CD4-positive, alpha-beta memory T cell (primary cell): ENCODE measurements at regions of chr10 and their contacts with region 1.

Region 1: GRCh38 chr10:51422311-51423120 is 276.9 kb downstream of the CSTF2T start:
- DNase-seq: peak in 4 of 5 donors; percentile 6 to 28 (median 14)
- H3K4me3 ChIP-seq: no peak overlapping the region
- H3K4me3 Mint-ChIP-seq: peak overlapping the region in 1 of 8 donors; percentile 49
- H3K27ac ChIP-seq: no peak overlapping the region
- H3K27ac Mint-ChIP-seq: peak overlapping the region in 1 of 7 donors; percentile 18
- H3K4me1 ChIP-seq: no peaks in the 10 kb centered on the region
- H3K4me1 Mint-ChIP-seq: peaks cover 2 to 7% (median 3%) of the 10 kb centered on the region in 4 donors
- H3K27me3 ChIP-seq: no peaks in the 10 kb centered on the region
- H3K27me3 Mint-ChIP-seq: peaks cover 3 to 4% of the 10 kb centered on the region in 2 donors

Region 2: GRCh38 chr10:51063659-51064535 is 358.6 kb before region 1 on chr10:
- CTCF ChIA-PET with region 1: interaction called, 8 read pairs
- POLR2A ChIA-PET with region 1: no interaction called
- intact Hi-C with region 1: loop called (anchors 1 kb)
- DNase-seq: no peak
- H3K4me3 ChIP-seq: no peak overlapping the region
- H3K4me3 Mint-ChIP-seq: no peak overlapping the region
- H3K27ac ChIP-seq: no peak overlapping the region
- H3K27ac Mint-ChIP-seq: no peak overlapping the region
- H3K4me1 ChIP-seq: no peaks in the 10 kb centered on the region
- H3K4me1 Mint-ChIP-seq: no peaks in the 10 kb centered on the region
- H3K27me3 ChIP-seq: no peaks in the 10 kb centered on the region
- H3K27me3 Mint-ChIP-seq: peaks cover 0 to 3% of the 10 kb centered on the region in 2 donors

Region 3: DNA sequence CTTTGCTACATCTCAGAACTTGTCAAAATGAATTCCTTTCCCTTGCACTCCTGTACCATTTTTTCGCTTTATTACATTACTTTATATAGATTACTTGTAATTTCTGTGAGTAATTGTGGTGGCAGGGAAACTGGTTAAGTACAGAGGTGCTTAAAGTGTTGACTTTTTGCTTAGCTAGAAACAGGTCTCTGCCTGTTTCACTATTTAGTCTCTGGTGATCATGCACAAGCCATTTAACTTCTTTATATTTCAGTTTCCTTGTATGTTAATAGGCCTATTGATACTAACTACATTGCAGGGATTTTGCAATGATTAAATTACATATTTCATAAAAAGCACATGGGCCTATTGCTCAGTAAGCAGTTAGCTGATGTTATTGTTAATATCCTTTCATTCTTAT is 114.4 kb before region 1 on chr10:
- CTCF ChIA-PET with region 1: no interaction called
- POLR2A ChIA-PET with region 1: no interaction called
- intact Hi-C with region 1: no loop called
- DNase-seq: no peak
- H3K4me3 ChIP-seq: no peak overlapping the region
- H3K4me3 Mint-ChIP-seq: no peak overlapping the region
- H3K27ac ChIP-seq: no peak overlapping the region
- H3K27ac Mint-ChIP-seq: no peak overlapping the region
- H3K4me1 ChIP-seq: no peaks in the 10 kb centered on the region
- H3K4me1 Mint-ChIP-seq: no peaks in the 10 kb centered on the region
- H3K27me3 ChIP-seq: no peaks in the 10 kb centered on the region
- H3K27me3 Mint-ChIP-seq: no peaks in the 10 kb centered on the region

Region 4: GRCh38 chr10:51564896-51565510 is 142.5 kb after region 1 on chr10:
- CTCF ChIA-PET with region 1: no interaction called
- POLR2A ChIA-PET with region 1: no interaction called
- intact Hi-C with region 1: no loop called
- DNase-seq: no peak
- H3K4me3 ChIP-seq: no peak overlapping the region
- H3K4me3 Mint-ChIP-seq: no peak overlapping the region
- H3K27ac ChIP-seq: no peak overlapping the region
- H3K27ac Mint-ChIP-seq: no peak overlapping the region
- H3K4me1 ChIP-seq: no peaks in the 10 kb centered on the region
- H3K4me1 Mint-ChIP-seq: no peaks in the 10 kb centered on the region
- H3K27me3 ChIP-seq: no peaks in the 10 kb centered on the region
- H3K27me3 Mint-ChIP-seq: no peaks in the 10 kb centered on the region

Region 5: DNA sequence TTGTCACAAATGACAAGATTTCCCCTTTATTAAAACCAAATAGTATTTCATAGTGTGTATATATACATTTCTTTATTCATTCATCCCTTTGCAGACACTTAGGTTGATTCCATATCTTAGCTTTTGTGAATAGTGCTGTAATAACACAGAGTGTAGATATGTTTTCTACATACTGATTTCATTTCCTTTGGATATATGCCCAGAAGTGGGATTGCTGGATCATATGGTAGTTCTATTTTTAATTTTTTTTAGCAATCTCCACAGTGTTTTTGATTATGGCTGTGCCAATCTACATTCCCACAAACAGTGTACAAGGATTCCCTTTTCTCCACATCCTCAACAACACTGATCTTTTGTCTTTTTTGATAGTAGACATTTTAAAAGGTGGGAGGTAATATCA is 230.5 kb after region 1 on chr10:
- CTCF ChIA-PET with region 1: no interaction called
- POLR2A ChIA-PET with region 1: no interaction called
- intact Hi-C with region 1: no loop called
- DNase-seq: no peak
- H3K4me3 ChIP-seq: no peak overlapping the region
- H3K4me3 Mint-ChIP-seq: no peak overlapping the region
- H3K27ac ChIP-seq: no peak overlapping the region
- H3K27ac Mint-ChIP-seq: no peak overlapping the region
- H3K4me1 ChIP-seq: no peaks in the 10 kb centered on the region
- H3K4me1 Mint-ChIP-seq: no peaks in the 10 kb centered on the region
- H3K27me3 ChIP-seq: no peaks in the 10 kb centered on the region
- H3K27me3 Mint-ChIP-seq: peaks cover 3 to 4% of the 10 kb centered on the region in 2 donors